ENCODE measurements at regions of chr9 and their contacts with region 1.

Region 1: GRCh38 chr9:128078504-128079434 is 10.7 kb downstream of the SLC25A25 start:
- DNase-seq: no peak
- H3K4me3 ChIP-seq: no peak overlapping the region
- H3K4me3 Mint-ChIP-seq: peak overlapping the region in 3 of 7 donors; percentile 8 to 49 (median 46)
- H3K27ac ChIP-seq: peak overlapping the region; percentile 75
- H3K27ac Mint-ChIP-seq: peak overlapping the region; percentile 34 to 87 (median 55)
- H3K4me1 ChIP-seq: peaks cover 29% of the 10 kb centered on the region
- H3K4me1 Mint-ChIP-seq: peaks cover 36 to 62% (median 53%) of the 10 kb centered on the region in 3 donors
- H3K27me3 ChIP-seq: no peaks in the 10 kb centered on the region
- H3K27me3 Mint-ChIP-seq: no peaks in the 10 kb centered on the region

Region 2: GRCh38 chr9:128067876-128068613 is 10.7 kb before region 1 on chr9 and contains the start of gene SLC25A25:
- CTCF ChIA-PET with region 1: interaction called, 4 read pairs
- POLR2A ChIA-PET with region 1: interaction called, 10 read pairs
- DNase-seq: peak; percentile 100
- H3K4me3 ChIP-seq: peak within 1 kb of the TSS; percentile 99
- H3K4me3 Mint-ChIP-seq: peak within 1 kb of the TSS; percentile 92 to 98 (median 96)
- H3K27ac ChIP-seq: peak within 1 kb of the TSS; percentile 89
- H3K27ac Mint-ChIP-seq: peak within 1 kb of the TSS; percentile 75 to 93 (median 91)
- H3K4me1 ChIP-seq: peaks cover 62% of the 10 kb centered on the region
- H3K4me1 Mint-ChIP-seq: peaks cover 45 to 58% (median 46%) of the 10 kb centered on the region in 3 donors
- H3K27me3 ChIP-seq: no peaks in the 10 kb centered on the region
- H3K27me3 Mint-ChIP-seq: peaks cover 0 to 3% of the 10 kb centered on the region in 2 donors
- total RNA-seq, gene SLC25A25: 17.7 to 17.8 TPM

Region 3: DNA sequence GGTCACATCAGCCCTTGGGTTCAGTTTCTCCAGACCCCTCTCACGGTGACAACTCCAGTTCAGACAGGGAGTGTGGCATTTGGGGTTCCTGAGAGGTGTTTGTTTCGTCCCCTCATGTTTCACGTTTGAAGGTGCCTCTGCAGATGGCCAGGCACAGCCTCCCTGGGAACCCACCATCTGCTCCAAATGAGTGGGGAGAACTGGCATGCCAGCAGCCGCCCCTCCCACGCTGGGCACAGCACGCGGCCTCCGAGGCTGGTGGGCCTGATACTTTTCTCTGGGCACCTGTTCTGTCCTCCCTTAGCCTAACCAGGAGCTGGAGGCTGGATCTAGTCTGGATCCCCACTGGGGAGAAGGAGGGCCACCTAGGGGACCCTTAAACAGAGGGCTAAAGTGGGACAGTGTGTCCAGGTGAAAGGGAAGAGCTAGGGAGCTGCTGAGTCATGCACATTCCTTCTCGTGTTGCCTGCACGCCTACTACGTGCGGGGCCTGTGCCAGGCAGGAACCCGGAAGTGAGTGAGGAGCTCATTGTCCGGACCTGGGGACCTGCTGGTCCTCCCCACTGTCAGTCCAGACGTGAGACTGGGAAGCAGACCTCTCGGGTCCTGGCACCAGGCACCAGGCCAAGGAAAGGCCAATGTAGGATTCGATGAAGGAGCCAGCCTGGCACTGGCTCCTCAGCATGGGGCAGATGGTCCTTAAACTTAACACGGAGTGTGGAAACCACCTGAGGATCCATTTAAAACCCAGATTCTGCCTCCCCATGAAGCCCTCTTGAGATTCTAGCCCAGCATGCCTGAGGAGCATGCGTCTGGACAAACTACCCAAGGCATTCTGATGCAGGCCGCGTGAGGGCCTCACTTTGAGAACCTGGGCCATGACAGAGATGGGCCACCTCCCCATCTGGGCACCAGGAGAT is 136.1 kb after region 1 on chr9:
- CTCF ChIA-PET with region 1: no interaction called
- POLR2A ChIA-PET with region 1: interaction called, 12 read pairs
- DNase-seq: no peak
- H3K4me3 ChIP-seq: no peak overlapping the region
- H3K4me3 Mint-ChIP-seq: no peak overlapping the region
- H3K27ac ChIP-seq: no peak overlapping the region
- H3K27ac Mint-ChIP-seq: no peak overlapping the region
- H3K4me1 ChIP-seq: peaks cover 13% of the 10 kb centered on the region
- H3K4me1 Mint-ChIP-seq: peaks cover 11 to 15% (median 12%) of the 10 kb centered on the region in 3 donors
- H3K27me3 ChIP-seq: no peaks in the 10 kb centered on the region
- H3K27me3 Mint-ChIP-seq: peaks cover 5 to 8% of the 10 kb centered on the region in 2 donors